H1 (cell line): ENCODE measurements at regions of chr2 and their contacts with region 1.

Region 1: DNA sequence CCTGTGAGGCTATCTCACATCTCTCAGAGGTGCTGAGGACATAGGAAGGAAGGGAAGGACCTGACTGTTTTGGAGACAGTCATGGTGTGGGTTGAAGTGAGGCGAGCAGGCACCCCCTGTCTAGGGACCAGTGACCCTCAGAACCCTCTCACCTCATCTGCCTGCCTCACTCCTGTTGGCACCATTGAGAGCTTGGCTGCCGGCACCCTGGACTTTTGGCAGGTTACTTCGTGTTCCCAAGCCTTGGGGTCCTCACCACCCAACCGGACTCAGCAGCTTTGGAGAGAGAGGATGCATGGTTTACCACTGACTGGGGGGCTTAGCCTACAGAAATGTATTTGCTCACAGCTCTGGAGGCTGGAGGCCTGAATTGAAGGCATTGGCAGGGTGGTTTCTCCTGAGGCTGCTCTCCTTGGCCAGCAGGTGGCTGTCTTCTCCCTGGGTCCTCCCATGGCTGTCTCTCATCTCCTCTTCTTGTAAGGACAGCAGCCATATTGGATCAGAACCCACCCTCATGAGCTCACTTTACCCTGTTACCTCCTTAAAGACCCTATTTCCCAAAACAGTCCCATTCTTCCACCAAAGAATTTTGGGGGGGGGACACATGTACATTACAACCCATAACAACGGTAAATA is 142.0 kb downstream of the TSN start:
- DNase-seq: no peak
- H3K4me3 ChIP-seq: no peak overlapping the region
- H3K27ac ChIP-seq: no peak overlapping the region
- H3K4me1 ChIP-seq: no peaks in the 10 kb centered on the region; a peak in 1 of 7 replicates
- H3K27me3 ChIP-seq: no peaks in the 10 kb centered on the region; a peak in 1 of 7 replicates
- CTCF ChIP-seq: peak; percentile 46 to 70 (median 61); a peak in 3 of 4 replicates
- EP300 ChIP-seq: no peak
- POLR2A ChIP-seq: no peak
- RAD21 ChIP-seq: peak; percentile 53 to 61

Region 2: GRCh38 chr2:121356058-121356640 is 541.3 kb before region 1 on chr2:
- CTCF ChIA-PET with region 1: no interaction called
- POLR2A ChIA-PET with region 1: no interaction called
- DNase-seq: peak; percentile 46 to 71
- H3K4me3 ChIP-seq: no peak overlapping the region
- H3K27ac ChIP-seq: no peak overlapping the region
- H3K4me1 ChIP-seq: no peaks in the 10 kb centered on the region
- H3K27me3 ChIP-seq: no peaks in the 10 kb centered on the region
- CTCF ChIP-seq: peak in 2 of 3 experiments; percentile 75 to 85; a peak in 3 of 4 replicates
- EP300 ChIP-seq: no peak
- POLR2A ChIP-seq: no peak
- RAD21 ChIP-seq: peak; percentile 77 to 80

Region 3: DNA sequence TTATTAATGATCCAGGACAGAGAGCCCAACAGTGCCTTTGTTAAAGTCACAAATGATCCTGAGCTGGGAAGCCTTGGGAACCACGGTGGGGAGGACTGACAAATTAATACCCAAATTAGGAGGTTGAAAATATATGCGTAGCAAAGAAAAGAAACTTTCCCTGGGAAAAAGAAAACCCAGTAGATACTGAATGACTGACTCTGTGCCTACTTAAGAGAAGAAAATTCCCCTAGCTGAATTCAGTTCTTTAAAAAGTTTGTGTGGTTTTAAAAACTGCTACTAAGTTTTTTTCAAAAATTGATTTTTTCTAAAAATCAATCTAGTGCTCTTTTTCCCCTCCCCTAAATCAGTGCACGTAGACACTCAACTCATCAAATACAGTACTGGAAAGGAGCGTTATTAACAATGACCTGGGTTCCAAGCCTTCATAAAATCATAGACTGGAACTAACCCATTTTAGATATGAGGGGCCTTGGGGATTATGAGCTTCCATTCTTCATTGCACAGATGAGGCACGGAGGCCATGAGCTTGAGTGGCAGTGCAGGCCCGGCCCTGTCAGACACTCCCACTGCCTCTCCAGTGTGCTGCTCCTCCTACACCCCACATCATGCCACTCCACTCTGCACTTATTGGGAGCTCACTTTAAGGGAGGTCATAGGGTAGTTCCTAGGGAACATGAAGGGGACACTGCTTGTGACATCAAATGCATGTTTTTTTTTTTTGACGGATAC is 64.3 kb before region 1 on chr2:
- CTCF ChIA-PET with region 1: no interaction called
- POLR2A ChIA-PET with region 1: no interaction called
- DNase-seq: no peak
- H3K4me3 ChIP-seq: no peak overlapping the region
- H3K27ac ChIP-seq: no peak overlapping the region
- H3K4me1 ChIP-seq: peaks cover 0 to 5% (median under 1%) of the 10 kb centered on the region in 4 experiments; a peak in 2 of 7 replicates
- H3K27me3 ChIP-seq: peaks cover 0 to 4% (median 0%) of the 10 kb centered on the region in 4 experiments; a peak in 2 of 7 replicates
- CTCF ChIP-seq: no peak
- EP300 ChIP-seq: no peak
- POLR2A ChIP-seq: no peak
- RAD21 ChIP-seq: no peak

Region 4: DNA sequence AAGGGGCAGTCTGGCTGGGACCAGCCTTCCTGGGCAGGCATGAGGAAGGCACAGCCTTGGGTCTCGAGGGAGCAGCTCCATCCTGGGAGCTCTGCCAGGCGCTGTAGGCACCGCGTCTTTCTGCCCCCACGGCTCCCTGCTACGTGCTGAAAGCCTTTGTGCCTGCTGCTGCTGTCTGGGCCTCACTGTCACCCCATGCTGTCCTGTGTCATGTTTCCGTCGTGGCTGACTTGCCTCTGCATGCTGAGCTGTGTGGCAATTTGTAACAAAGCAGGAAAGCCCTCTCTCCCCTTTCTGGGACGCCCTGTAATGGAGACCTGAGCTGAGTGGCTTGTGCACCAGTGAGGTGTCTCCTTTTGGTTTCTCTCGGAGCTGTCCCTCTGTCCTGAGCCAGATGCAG is 10.5 kb after region 1 on chr2:
- CTCF ChIA-PET with region 1: interaction called, 13 read pairs
- POLR2A ChIA-PET with region 1: no interaction called
- DNase-seq: no peak
- H3K4me3 ChIP-seq: no peak overlapping the region
- H3K27ac ChIP-seq: no peak overlapping the region
- H3K4me1 ChIP-seq: no peaks in the 10 kb centered on the region; a peak in 1 of 7 replicates
- H3K27me3 ChIP-seq: no peaks in the 10 kb centered on the region
- CTCF ChIP-seq: no peak
- EP300 ChIP-seq: no peak
- POLR2A ChIP-seq: no peak
- RAD21 ChIP-seq: no peak

Region 5: GRCh38 chr2:121918231-121918630 is 20.8 kb after region 1 on chr2:
- CTCF ChIA-PET with region 1: interaction called, 12 read pairs
- POLR2A ChIA-PET with region 1: no interaction called
- DNase-seq: no peak
- H3K4me3 ChIP-seq: no peak overlapping the region
- H3K27ac ChIP-seq: no peak overlapping the region
- H3K4me1 ChIP-seq: no peaks in the 10 kb centered on the region
- H3K27me3 ChIP-seq: no peaks in the 10 kb centered on the region
- CTCF ChIP-seq: no peak
- EP300 ChIP-seq: no peak
- POLR2A ChIP-seq: no peak
- RAD21 ChIP-seq: no peak

Region 6: DNA sequence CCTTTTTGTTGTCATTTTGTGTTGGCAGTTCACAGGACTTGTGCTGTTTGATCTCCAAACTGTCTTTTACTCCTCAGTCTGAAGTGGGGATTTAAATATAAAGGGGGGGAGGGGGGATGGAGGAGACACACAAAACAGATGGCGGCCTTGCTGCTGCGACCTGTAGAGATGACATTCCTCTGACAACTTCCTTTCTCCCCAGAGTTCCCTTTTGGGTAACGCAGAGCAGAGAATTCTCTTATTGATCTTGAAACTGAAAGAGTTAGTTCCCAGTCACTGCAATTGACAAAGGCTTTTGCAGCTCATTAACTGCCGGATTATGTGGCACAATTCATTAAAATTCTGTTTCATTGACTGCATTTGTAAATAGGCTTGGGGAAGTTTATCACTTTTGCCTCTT is 137.3 kb after region 1 on chr2:
- CTCF ChIA-PET with region 1: no interaction called
- POLR2A ChIA-PET with region 1: no interaction called
- DNase-seq: no peak
- H3K4me3 ChIP-seq: no peak overlapping the region
- H3K27ac ChIP-seq: no peak overlapping the region
- H3K4me1 ChIP-seq: peaks cover 3 to 10% (median 7%) of the 10 kb centered on the region in 4 experiments; a peak in 5 of 7 replicates
- H3K27me3 ChIP-seq: no peaks in the 10 kb centered on the region
- CTCF ChIP-seq: no peak
- EP300 ChIP-seq: no peak
- POLR2A ChIP-seq: no peak
- RAD21 ChIP-seq: no peak